ACHN (cell line): ENCODE measurements at regions of chr17 and their contacts with region 1.

Region 1: DNA sequence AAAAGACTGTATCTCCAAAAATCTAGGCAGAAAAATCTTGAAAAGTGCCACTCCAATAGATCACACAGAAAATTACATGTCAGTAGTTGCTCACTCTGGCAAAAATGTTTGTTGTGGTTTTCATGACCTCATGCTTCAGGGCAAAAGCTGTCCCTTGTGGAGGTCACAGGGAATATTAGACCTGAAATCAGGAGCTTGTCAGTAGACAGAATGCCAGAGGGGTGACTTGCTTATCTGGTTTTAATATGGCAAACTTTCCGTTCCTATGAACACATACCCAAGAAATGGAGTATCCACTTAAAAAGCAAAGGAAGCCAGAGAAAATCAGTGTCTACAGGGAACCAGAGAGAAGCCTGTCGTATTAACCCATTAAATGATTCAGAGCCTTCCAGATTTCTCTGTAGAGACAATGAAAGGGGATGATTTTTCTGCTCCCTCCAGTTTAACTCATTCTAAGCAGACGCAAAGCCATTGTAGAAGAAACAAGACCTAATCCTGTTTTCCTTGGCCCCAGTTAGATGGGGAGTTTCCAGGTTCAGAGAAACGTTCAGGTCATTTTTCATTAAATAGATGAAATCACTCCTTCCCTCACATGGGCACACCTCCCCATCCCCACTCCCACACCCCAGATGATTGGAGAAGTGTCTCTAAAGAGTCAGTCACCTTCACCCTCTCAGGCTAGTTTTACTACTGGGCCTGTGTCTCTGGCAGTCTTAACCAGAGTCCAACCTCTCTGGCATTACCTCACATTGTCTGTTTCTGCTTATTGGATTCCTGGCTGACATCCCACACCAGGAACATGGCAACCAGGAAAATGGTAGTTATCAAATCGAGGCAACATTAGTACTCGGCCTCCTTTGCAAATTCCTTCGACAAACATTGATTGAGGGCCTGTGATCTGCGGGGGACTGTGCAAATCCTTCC is 6.0 kb downstream of the SOX9 start:
- DNase-seq: peak; percentile 23

Region 2: GRCh38 chr17:72407336-72407909 is 280.6 kb after region 1 on chr17:
- in situ Hi-C with region 1: loop called (anchors 25 kb)
- DNase-seq: peak; percentile 91

Region 3: DNA sequence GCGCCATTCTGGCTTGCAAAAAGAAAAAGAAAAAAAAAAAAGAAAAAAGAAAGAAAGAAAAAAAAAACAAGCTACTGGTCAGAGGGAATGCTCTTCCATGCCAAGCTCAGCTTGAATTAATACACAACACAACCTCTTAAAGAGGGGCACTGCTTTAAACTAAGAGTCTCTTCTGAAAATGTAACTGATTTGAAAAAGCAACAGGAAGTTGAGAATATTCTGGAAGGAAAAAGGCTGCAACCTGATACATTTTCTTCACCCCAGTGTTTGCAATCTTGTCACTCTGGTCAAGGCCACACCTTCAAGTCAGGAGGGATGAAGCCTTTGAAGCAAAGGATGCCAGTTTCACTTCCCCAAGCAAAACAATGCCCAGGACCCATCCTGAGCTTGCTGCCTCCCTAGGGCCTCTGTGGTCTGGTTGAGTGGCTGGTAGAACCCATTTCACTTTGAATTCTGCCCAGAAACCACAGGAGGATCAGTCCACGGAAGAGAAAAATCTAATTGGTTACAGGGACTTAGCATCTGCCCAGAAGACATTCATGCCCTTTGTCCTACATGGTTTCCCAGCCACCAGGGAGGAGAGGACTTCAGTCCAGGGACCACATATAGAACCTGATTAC is 383.7 kb after region 1 on chr17:
- in situ Hi-C with region 1: no loop called
- DNase-seq: peak; percentile 14